HEK293 (cell line): ENCODE measurements at regions of chr2 and their contacts with region 1.

Region 1: GRCh38 chr2:100730346-100730745 is 89.6 kb upstream of the NPAS2 start:
- H3K4me3 ChIP-seq: no peak overlapping the region
- H3K27ac ChIP-seq: no peak overlapping the region
- H3K4me1 ChIP-seq: no peaks in the 10 kb centered on the region
- CTCF ChIP-seq: no peak

Region 2: DNA sequence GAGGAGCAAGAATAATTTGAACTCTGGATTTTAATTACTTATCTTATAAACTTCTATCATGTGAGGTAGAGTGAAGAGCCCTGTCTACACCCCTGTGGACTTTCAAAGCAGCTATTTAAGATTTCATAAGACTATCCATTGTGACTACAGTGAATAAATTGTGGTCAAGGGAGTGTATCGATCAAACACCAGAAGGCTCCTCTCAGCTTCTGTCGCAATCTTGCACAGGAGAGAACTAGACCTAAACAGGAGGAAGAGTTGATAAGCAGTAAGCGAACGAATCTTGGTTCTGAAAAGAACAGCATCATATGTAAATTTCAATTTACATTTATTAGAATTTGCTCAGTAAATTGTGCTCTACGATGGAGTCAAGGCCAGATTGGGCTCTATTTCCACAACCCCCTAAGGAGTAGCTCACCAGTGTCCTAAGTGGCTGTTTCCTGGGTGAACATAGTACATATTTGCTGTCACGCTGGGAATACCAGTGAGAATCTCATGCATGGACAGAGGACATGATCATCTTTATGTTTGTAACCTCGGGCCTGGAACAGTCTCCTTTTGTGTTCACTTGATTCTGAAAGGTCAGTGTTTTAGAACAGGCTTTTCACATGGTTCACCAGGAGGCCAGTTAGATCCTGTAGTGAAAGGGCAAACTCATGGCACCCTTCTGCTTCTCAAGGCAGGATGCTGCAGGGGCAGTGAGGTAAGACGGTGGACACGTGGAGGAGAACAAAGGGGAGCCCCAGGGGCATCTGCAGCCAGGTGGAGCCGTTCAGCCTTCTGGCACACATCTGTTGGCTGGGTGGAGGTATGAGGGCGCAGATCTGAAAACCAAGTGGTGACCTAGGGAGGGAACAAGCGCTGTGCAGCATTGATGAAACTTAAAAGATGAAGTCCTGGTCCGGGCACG is 122.9 kb after region 1 on chr2:
- CTCF ChIA-PET with region 1: no interaction called
- POLR2A ChIA-PET with region 1: no interaction called
- H3K4me3 ChIP-seq: no peak overlapping the region
- H3K27ac ChIP-seq: no peak overlapping the region
- H3K4me1 ChIP-seq: no peaks in the 10 kb centered on the region
- CTCF ChIP-seq: peak; percentile 13; the same call in 1 of the 2 replicates

Region 3: DNA sequence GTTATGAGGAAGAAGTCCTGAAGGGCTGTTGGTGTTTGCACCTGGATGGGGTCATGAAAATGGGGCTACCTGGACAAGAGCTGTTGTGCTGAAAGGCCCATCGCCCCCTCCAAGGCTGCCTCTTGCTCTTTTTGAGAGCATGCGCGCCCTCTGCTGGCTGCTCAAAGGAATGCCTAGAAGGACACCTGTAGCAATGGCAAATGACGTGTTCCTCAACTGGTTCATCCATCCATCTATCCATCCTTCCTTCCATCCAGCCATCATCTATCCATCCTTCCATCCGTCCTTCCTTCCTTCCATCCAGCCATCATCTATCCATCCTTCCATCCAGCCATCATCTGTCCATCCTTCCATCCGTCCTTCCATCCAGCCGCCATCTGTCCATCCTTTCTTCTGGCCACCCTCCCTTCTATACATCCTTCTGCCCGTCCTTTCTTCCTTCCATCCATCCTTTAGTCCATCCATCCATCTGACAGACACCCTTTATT is 254.6 kb after region 1 on chr2:
- CTCF ChIA-PET with region 1: interaction called, 83 read pairs
- POLR2A ChIA-PET with region 1: interaction called, 3 read pairs
- H3K4me3 ChIP-seq: no peak overlapping the region
- H3K27ac ChIP-seq: no peak overlapping the region
- H3K4me1 ChIP-seq: no peaks in the 10 kb centered on the region
- CTCF ChIP-seq: peak; percentile 91